ENCODE measurements at regions of chr22 and their contacts with region 1.

Region 1: GRCh38 chr22:31127181-31127772 is 4.5 kb downstream of the INPP5J start:
- DNase-seq: no peak
- H3K4me3 ChIP-seq: no peak overlapping the region
- H3K27ac ChIP-seq: no peak overlapping the region
- H3K4me1 ChIP-seq: peaks cover 3 to 14% of the 10 kb centered on the region in 2 donors
- H3K27me3 ChIP-seq: no peaks in the 10 kb centered on the region
- CTCF ChIP-seq: no peak
- POLR2A ChIP-seq: no peak

Region 2: GRCh38 chr22:30705710-30706651 is 421.3 kb before region 1 on chr22:
- intact Hi-C with region 1: no loop called
- DNase-seq: no peak
- H3K4me3 ChIP-seq: no peak overlapping the region
- H3K27ac ChIP-seq: no peak overlapping the region
- H3K4me1 ChIP-seq: no peaks in the 10 kb centered on the region
- H3K27me3 ChIP-seq: no peaks in the 10 kb centered on the region
- CTCF ChIP-seq: no peak
- POLR2A ChIP-seq: no peak

Region 3: DNA sequence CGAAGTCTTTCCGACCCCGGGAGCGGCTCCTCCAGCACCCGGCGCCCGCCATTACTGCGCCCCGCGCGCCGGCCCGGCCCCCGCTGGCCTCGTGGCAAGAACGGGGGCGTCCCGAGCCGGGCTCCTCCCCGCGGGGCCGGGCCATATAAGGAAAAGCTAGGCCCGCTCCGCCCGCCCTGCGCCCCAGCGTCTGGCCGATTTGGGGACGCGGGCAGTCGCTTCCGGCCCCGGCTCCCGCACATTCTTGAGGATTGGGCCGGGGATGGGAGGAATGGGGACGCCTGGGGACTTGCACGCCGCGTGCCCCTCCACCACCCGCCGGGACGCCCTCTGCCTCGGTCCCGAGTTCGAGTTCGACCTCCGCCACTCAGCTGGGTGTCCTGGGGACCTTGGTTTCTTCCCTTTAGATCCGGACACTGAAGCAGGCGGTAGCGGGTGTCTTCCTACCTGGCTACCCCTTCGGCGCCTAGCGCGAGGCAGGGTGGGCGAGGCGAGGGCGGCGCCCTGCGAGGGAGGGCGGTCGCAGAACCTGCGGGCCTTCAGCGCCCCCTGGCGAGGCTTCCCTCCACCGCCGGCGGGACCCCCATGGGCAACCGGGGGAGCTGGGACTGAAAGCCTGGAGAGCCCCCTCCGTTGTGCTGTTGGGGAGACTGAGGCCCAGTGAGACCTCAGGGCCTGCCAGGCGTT is 42.3 kb before region 1 on chr22:
- intact Hi-C with region 1: no loop called
- DNase-seq: peak; percentile 90 to 91
- H3K4me3 ChIP-seq: peak overlapping the region; percentile 58 to 85 (median 69)
- H3K27ac ChIP-seq: peak overlapping the region; percentile 94 to 97
- H3K4me1 ChIP-seq: peaks cover 0 to 29% of the 10 kb centered on the region in 2 donors
- H3K27me3 ChIP-seq: no peaks in the 10 kb centered on the region
- CTCF ChIP-seq: peak; percentile 67 to 87 (median 81)
- POLR2A ChIP-seq: peak; percentile 26

Region 4: GRCh38 chr22:31177420-31178162 is 50.3 kb after region 1 on chr22:
- intact Hi-C with region 1: loop called (anchors 2 kb)
- DNase-seq: peak in 1 of 2 donors; percentile 77
- H3K4me3 ChIP-seq: no peak overlapping the region
- H3K27ac ChIP-seq: peak overlapping the region; percentile 33 to 38
- H3K4me1 ChIP-seq: peaks cover 0 to 5% of the 10 kb centered on the region in 2 donors
- H3K27me3 ChIP-seq: no peaks in the 10 kb centered on the region
- CTCF ChIP-seq: no peak
- POLR2A ChIP-seq: no peak

Region 5: GRCh38 chr22:31650391-31650790 is 523.1 kb after region 1 on chr22:
- intact Hi-C with region 1: loop called (anchors 5 kb)
- DNase-seq: no peak
- H3K4me3 ChIP-seq: no peak overlapping the region
- H3K27ac ChIP-seq: no peak overlapping the region
- H3K4me1 ChIP-seq: no peaks in the 10 kb centered on the region
- H3K27me3 ChIP-seq: no peaks in the 10 kb centered on the region
- CTCF ChIP-seq: no peak
- POLR2A ChIP-seq: no peak

Region 6: GRCh38 chr22:31715147-31715778 is 588.0 kb after region 1 on chr22:
- intact Hi-C with region 1: no loop called
- DNase-seq: no peak
- H3K4me3 ChIP-seq: no peak overlapping the region
- H3K27ac ChIP-seq: no peak overlapping the region
- H3K4me1 ChIP-seq: no peaks in the 10 kb centered on the region
- H3K27me3 ChIP-seq: no peaks in the 10 kb centered on the region
- CTCF ChIP-seq: no peak
- POLR2A ChIP-seq: no peak